ENCODE measurements at regions of chr5 and their contacts with region 1.

Region 1: DNA sequence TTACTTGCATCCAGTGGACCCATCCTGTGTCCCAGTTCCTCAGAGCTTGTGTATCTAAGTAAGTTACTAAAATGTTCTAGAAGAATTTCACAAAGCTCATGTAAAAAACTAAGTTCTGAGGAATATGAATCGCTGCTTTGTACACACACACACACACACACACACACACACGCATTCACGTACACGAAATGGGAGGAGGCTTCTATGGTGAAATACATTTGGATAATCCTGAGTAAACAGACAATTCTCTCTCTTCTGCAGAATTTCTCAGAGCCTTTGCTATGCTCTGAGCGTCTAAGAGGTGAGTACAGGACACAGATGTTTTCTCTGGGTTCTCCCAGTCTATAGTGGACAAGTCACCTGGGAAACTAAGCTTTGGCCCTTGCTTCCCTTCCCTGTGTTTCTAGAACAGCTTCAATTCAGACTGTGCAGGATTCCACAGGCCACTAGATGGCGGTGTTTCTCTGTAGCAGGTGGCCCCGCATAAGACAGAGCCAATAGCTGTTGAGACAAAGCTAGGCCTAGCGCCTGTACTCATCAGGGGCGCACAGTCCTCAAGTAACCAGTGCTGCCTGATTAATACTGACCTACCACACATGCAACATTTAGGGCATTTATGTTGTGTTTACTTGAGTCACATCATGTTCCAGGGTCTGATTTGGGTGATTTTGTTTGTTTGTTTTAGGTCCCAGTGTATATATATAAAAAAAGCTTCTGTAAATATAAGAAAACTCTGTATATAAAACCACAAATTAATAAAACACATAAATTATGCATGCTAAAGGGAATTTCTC is 114.8 kb downstream of the LIFR start:
- DNase-seq: peak; percentile 89
- ATAC-seq: peak; percentile 94
- H3K4me3 ChIP-seq: no peak overlapping the region
- H3K27ac ChIP-seq: no peak overlapping the region; the same call in 1 of the 2 replicates
- H3K4me1 ChIP-seq: 0 out of 2 replicates have a peak, but pooled peaks cover 5% of the 10 kb centered on the region
- H3K27me3 ChIP-seq: no peaks in the 10 kb centered on the region
- CTCF ChIP-seq: peak; percentile 96

Region 2: DNA sequence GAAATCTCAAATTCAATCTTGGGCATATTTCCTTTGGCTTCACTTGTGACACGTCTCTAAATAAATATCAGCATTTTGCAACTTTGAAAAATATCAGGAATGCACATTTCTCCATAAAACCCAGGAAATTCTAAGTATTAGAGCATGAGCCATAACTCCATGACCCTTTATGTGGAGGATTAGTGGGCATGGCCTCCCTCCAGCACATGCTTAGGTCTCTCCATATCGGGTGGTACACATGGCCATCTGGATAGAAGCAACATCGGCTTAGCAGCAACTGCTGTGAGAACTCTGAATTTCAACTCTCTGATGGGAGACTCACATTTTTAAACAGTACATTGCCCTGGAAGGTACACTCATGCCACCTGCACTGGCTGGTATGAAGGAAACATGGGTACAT is 257.0 kb before region 1 on chr5:
- CTCF ChIA-PET with region 1: no interaction called
- POLR2A ChIA-PET with region 1: no interaction called
- in situ Hi-C with region 1: no loop called
- intact Hi-C with region 1: no loop called
- DNase-seq: no peak
- ATAC-seq: no peak
- H3K4me3 ChIP-seq: no peak overlapping the region
- H3K27ac ChIP-seq: no peak overlapping the region
- H3K4me1 ChIP-seq: no peaks in the 10 kb centered on the region
- H3K27me3 ChIP-seq: peaks cover 4% of the 10 kb centered on the region
- CTCF ChIP-seq: no peak

Region 3: DNA sequence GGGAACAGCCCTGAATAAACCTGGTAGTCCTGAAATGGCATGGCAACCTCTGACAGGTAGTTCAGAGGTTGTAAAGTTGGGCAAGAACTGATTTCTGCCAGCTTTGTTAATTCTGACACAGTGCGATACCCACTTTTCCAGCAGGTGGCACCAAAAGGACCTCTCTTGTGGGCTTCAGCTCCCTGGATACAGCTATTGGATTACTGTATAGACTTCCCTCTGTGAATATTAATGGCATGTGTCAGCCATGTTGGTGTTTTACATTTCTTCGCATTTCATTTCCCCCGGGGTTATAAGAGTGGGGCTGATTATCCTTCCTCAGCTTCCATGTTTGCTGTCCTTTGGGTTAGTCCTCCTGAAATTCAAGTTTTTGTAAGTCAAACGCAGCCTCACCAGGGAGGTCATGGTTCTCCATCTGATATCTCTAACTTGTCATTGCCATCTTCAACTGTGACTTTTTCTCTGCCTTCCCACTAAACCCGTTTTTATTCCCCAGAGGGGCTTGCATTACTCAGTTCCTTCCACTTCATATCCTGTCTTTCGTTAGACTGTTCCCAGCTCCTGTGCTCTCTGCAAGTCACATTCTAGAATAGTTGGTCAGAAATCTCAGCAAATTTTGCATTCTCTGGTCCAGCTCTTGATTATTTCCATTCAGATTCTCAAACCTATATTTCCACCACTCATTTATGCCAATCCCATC is 20.8 kb before region 1 on chr5:
- CTCF ChIA-PET with region 1: interaction called, 27 read pairs
- POLR2A ChIA-PET with region 1: no interaction called
- in situ Hi-C with region 1: no loop called
- intact Hi-C with region 1: no loop called
- DNase-seq: peak; percentile 63
- ATAC-seq: peak; percentile 93
- H3K4me3 ChIP-seq: no peak overlapping the region
- H3K27ac ChIP-seq: no peak overlapping the region
- H3K4me1 ChIP-seq: no peaks in the 10 kb centered on the region
- H3K27me3 ChIP-seq: no peaks in the 10 kb centered on the region; the same call in 1 of the 2 replicates
- CTCF ChIP-seq: peak; percentile 90

Region 4: DNA sequence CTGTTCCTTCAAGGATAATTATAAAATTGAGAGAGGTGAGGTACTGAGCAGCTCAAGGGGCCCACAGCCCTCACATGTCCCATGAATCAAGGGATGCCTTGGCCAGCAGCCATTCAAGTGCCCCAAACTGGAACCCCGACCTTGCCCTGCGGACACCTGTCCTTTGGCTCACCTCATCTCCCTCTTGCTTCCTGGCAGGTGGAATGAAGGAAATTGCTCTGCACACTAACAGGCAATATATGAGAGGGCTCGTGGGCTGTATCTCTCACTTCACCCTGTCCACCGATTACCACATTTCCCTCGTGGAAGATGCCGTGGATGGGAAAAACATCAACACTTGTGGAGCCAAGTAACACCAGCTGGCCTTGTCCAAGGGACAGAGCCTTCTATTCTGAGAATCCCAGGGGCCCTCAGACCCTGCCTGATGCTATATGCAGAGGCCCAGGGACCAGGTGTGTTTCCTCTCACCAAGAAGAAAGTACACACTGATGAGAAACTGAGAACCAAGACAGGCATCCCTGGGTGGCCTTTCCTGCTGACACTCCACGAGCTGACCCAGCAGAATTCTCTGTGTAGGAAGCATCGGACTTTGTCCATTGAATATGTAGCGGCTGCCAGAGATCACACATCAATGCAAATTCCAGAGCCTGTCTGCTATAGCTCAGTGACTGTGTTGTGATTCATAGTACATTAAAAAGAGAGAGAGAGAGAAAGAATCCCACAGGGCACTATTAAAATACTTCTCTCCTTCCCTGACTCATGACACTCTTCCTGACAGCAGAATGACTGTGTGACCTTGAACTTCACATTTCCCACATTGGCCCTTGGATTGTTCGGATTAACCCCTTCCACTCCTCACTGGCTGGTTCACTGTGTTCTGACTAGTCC is 22.2 kb after region 1 on chr5:
- CTCF ChIA-PET with region 1: interaction called, 12 read pairs
- POLR2A ChIA-PET with region 1: interaction called, 4 read pairs
- in situ Hi-C with region 1: no loop called
- intact Hi-C with region 1: no loop called
- DNase-seq: peak; percentile 94
- ATAC-seq: peak; percentile 87
- H3K4me3 ChIP-seq: peak overlapping the region in 1 of 2 experiments; percentile 9; a peak in 2 of 4 replicates
- H3K27ac ChIP-seq: peak overlapping the region; percentile 86
- H3K4me1 ChIP-seq: peaks cover 54% of the 10 kb centered on the region
- H3K27me3 ChIP-seq: no peaks in the 10 kb centered on the region
- CTCF ChIP-seq: no peak

Region 5: DNA sequence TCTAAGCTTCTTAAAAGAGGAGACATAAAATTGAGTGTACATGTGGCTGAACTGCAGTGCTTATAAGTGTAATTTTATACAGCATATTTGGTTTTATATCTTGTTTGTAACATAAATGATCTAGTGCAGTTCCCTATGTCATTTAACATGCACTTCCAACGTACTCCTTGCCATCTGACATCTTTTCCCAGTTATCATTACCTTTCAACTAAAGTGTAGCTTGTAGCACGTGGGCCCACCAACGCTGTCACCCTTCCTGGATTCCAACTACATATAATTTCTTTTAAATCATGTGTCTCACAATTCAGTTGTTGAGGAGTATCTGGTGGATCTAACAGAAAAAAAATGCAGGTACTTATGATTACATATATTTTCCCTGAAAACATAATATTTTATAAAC is 64.7 kb after region 1 on chr5:
- CTCF ChIA-PET with region 1: interaction called, 11 read pairs
- POLR2A ChIA-PET with region 1: no interaction called
- in situ Hi-C with region 1: no loop called
- intact Hi-C with region 1: no loop called
- DNase-seq: no peak
- ATAC-seq: no peak
- H3K4me3 ChIP-seq: no peak overlapping the region
- H3K27ac ChIP-seq: no peak overlapping the region
- H3K4me1 ChIP-seq: no peaks in the 10 kb centered on the region
- H3K27me3 ChIP-seq: no peaks in the 10 kb centered on the region
- CTCF ChIP-seq: no peak

Region 6: GRCh38 chr5:38569180-38569579 is 127.5 kb after region 1 on chr5:
- CTCF ChIA-PET with region 1: no interaction called
- POLR2A ChIA-PET with region 1: no interaction called
- in situ Hi-C with region 1: no loop called
- intact Hi-C with region 1: no loop called
- DNase-seq: no peak
- ATAC-seq: no peak
- H3K4me3 ChIP-seq: no peak overlapping the region
- H3K27ac ChIP-seq: no peak overlapping the region
- H3K4me1 ChIP-seq: no peaks in the 10 kb centered on the region
- H3K27me3 ChIP-seq: peaks cover 2% of the 10 kb centered on the region; the same call in 1 of the 2 replicates
- CTCF ChIP-seq: no peak

Region 7: GRCh38 chr5:38809388-38810359 is 368.0 kb after region 1 on chr5:
- CTCF ChIA-PET with region 1: interaction called, 67 read pairs
- POLR2A ChIA-PET with region 1: interaction called, 5 read pairs
- in situ Hi-C with region 1: no loop called
- intact Hi-C with region 1: loop called (anchors 2 kb)
- DNase-seq: no peak
- ATAC-seq: peak; percentile 90
- H3K4me3 ChIP-seq: no peak overlapping the region
- H3K27ac ChIP-seq: peak overlapping the region; percentile 93
- H3K4me1 ChIP-seq: peaks cover 44% of the 10 kb centered on the region
- H3K27me3 ChIP-seq: no peaks in the 10 kb centered on the region
- CTCF ChIP-seq: peak; percentile 90

Region 8: DNA sequence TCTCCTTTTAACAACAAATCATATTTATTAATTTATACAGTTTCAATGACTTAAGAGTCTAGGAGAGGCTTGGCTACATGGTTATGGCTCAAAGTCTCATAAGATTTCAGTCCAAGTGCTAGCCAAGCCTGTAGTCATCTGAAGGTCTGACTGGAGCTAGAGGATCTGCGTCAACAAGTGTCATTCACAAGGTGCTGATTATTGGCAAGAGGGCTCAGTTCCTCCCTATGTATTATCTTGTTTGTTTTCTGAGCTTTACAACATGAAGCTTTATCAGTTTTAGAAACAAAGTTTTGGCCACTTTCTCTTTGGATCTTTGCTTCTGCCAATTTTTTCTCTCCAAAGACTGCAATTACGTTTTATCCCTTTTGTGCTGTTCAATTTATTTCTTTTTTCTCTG is 537.9 kb after region 1 on chr5:
- CTCF ChIA-PET with region 1: no interaction called
- POLR2A ChIA-PET with region 1: interaction called, 10 read pairs
- in situ Hi-C with region 1: no loop called
- intact Hi-C with region 1: no loop called
- DNase-seq: no peak
- ATAC-seq: no peak
- H3K4me3 ChIP-seq: no peak overlapping the region
- H3K27ac ChIP-seq: no peak overlapping the region
- H3K4me1 ChIP-seq: no peaks in the 10 kb centered on the region
- H3K27me3 ChIP-seq: no peaks in the 10 kb centered on the region
- CTCF ChIP-seq: no peak

Measured in Panc1 (cell line).